Body of pancreas (tissue), 4 donors: ENCODE measurements at regions of chr11 and their contacts with region 1.

Region 1: DNA sequence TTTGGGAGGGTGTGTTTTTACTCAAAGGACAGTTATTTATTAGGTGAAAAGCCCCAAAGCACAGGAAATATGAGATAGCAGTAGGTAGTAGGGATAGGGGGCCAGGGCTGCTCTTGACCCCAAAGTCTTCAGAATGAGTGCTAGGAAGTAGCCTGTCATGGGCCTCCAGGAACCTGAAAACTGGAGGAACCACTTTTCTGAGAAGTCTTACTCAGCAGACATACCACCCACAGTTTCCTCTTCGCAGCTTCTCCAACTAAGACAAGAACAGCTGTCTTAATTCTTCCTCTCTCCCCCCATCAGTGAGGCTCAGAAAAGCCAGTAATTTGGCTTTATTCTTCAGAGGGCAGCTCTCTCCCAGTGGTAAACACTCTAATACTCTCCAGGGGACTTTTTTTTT is 84.0 kb upstream of the CTSC start:
- DNase-seq: peak in 1 of 4 donors; percentile 42
- ATAC-seq: no peak
- H3K4me3 ChIP-seq: no peak overlapping the region
- H3K27ac ChIP-seq: peak overlapping the region in 1 of 4 donors; percentile 3
- H3K4me1 ChIP-seq: no peaks in the 10 kb centered on the region
- H3K27me3 ChIP-seq: no peaks in the 10 kb centered on the region
- CTCF ChIP-seq: no peak
- POLR2A ChIP-seq: no peak

Region 2: GRCh38 chr11:88464528-88464927 is 43.0 kb after region 1 on chr11:
- intact Hi-C with region 1: no loop called
- DNase-seq: no peak
- ATAC-seq: no peak
- H3K4me3 ChIP-seq: no peak overlapping the region
- H3K27ac ChIP-seq: no peak overlapping the region
- H3K4me1 ChIP-seq: no peaks in the 10 kb centered on the region
- H3K27me3 ChIP-seq: no peaks in the 10 kb centered on the region
- CTCF ChIP-seq: no peak
- POLR2A ChIP-seq: no peak

Region 3: GRCh38 chr11:88475991-88476418 is 54.5 kb after region 1 on chr11:
- intact Hi-C with region 1: loop called (anchors 10 kb)
- DNase-seq: no peak
- ATAC-seq: no peak
- H3K4me3 ChIP-seq: no peak overlapping the region
- H3K27ac ChIP-seq: no peak overlapping the region
- H3K4me1 ChIP-seq: no peaks in the 10 kb centered on the region
- H3K27me3 ChIP-seq: no peaks in the 10 kb centered on the region
- CTCF ChIP-seq: no peak
- POLR2A ChIP-seq: no peak